ENCODE measurements at regions of chr15 and their contacts with region 1.

Region 1: DNA sequence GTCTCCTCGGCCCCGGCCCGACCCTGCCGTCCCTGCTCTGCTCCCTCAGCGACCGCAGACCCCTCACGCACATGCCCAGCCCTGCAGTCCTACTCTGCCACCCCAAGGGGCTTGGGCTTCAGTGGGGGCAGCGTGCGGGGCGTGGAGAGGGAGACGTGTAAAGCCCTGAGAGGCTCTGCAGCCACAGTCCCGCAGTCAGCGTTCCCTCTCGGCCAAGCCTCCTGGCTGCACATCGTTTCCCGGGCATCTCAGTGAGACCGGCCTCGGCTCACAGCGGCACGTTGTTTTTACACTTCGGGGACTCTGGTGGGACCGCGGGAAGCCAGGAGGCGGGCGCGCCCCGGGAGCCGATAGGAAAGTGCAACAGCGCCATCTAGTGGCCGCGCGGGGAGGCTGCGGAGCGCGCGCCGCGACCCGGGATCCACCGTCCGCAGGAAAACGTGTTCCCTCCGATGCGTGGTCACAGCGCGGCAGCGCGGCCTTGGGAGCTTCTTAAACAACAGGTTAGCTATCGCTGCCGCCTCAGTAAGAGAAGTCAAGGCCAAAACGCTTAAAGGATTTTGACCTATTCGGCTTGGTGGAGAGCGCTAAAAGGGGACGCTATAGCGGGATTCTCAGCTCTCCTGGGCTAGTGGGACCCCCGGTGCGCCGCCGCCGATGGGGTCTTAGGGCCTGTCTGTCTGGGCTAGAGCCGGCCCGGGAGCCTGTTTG is 226.8 kb upstream of the IGF1R start:
- DNase-seq: peak; percentile 75 to 86
- H3K4me3 ChIP-seq: peak overlapping the region; percentile 20 to 43 (median 27)
- H3K27ac ChIP-seq: no peak overlapping the region
- H3K4me1 ChIP-seq: peaks cover 9 to 28% (median 16%) of the 10 kb centered on the region in 4 donors
- H3K27me3 ChIP-seq: peaks cover 6 to 57% (median 34%) of the 10 kb centered on the region in 3 donors
- CTCF ChIP-seq: peak in 5 of 7 experiments; percentile 89 to 100 (median 98)
- EP300 ChIP-seq: no peak
- POLR2A ChIP-seq: no peak

Region 2: DNA sequence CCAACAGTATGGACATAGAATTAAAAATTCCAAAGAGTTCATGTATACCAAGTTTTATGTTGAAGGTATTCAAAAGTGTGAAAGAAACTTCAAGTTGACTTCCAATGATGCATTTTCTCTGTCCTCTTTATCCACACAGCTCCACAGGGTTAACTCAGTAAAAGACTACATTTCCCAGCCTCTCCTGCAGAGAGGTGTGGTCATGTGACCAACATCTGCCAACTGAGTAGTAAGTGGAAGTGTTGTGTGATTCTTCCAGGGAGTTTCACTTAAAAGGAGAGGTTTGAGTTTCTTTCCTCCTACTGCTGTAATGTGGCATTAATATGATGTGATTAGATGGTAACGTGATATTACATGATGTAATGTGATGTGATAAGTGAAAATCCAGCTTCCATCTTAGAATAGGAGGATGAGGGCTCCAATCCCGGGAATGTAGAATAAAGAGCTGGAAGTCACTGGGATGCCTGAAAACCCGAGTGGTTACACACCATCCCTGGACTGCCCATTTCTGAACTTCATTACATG is 180.5 kb before region 1 on chr15:
- intact Hi-C with region 1: no loop called
- DNase-seq: no peak
- H3K4me3 ChIP-seq: no peak overlapping the region
- H3K27ac ChIP-seq: no peak overlapping the region
- H3K4me1 ChIP-seq: no peaks in the 10 kb centered on the region
- H3K27me3 ChIP-seq: no peaks in the 10 kb centered on the region
- CTCF ChIP-seq: no peak
- EP300 ChIP-seq: no peak
- POLR2A ChIP-seq: no peak

Region 3: GRCh38 chr15:98311566-98312188 is 109.9 kb before region 1 on chr15:
- intact Hi-C with region 1: loop called (anchors 2 kb)
- DNase-seq: peak; percentile 87 to 90
- H3K4me3 ChIP-seq: no peak overlapping the region
- H3K27ac ChIP-seq: no peak overlapping the region
- H3K4me1 ChIP-seq: peaks cover 0 to 7% (median 3%) of the 10 kb centered on the region in 4 donors
- H3K27me3 ChIP-seq: no peaks in the 10 kb centered on the region
- CTCF ChIP-seq: peak in 6 of 7 experiments; percentile 31 to 86 (median 80)
- EP300 ChIP-seq: no peak
- POLR2A ChIP-seq: no peak

Region 4: DNA sequence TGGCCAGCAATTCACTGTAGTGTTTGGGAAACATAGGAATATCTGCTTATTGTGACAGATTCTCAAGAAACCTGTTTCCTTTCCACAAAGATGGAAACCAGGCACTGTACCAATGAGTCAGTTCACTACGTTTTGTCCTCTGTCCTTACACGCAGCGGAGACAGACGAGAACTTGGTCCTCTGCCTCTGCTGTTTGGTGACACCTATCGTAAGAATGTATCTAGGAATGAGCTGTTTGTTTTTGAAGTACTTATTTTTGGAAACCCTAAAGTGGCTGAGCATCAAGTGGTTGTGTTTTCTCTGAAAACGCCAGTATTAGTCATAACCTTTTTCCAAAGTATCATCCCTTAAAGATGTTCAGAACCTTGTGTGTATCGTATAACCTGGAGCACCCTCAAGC is 493.1 kb after region 1 on chr15:
- intact Hi-C with region 1: no loop called
- DNase-seq: no peak
- H3K4me3 ChIP-seq: no peak overlapping the region
- H3K27ac ChIP-seq: peak overlapping the region in 3 of 5 donors; percentile 11 to 73 (median 69)
- H3K4me1 ChIP-seq: peaks cover 10 to 28% (median 21%) of the 10 kb centered on the region in 4 donors
- H3K27me3 ChIP-seq: no peaks in the 10 kb centered on the region
- CTCF ChIP-seq: no peak
- EP300 ChIP-seq: no peak
- POLR2A ChIP-seq: no peak

Measured in stomach (tissue), 19 donors.